ENCODE measurements at regions of chr15 and their contacts with region 1.

Region 1: GRCh38 chr15:86877171-86877646 is 797.5 kb downstream of the AGBL1 start:
- DNase-seq: peak in 1 of 2 donors; percentile 55
- ATAC-seq: peak; percentile 76 to 84 (median 81)
- H3K4me3 ChIP-seq: no peak overlapping the region
- H3K27ac ChIP-seq: peak overlapping the region; percentile 39
- H3K4me1 ChIP-seq: peaks cover 3% of the 10 kb centered on the region
- H3K27me3 ChIP-seq: no peaks in the 10 kb centered on the region
- CTCF ChIP-seq: peak; percentile 53

Region 2: DNA sequence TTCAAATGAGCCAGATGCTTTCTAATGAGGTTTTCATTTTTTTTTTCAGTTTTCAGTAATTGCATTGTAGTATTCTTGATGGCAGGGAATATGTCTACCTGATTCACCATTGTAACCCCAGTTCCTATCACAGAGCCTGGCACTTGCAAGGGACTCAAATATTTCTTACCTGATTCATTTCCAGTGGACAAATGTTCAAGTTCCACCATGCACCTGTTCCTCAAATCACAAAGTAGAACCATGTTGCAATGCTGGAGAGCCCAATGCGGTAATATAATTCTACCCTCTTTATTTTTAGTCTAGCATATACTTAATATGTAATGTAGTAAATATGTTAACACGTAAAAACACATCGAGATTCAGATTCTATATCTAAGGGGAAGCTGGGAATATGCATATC is 75.0 kb before region 1 on chr15:
- intact Hi-C with region 1: loop called in 1 of 2 experiments (anchors 5 kb)
- DNase-seq: no peak
- ATAC-seq: peak; percentile 83 to 94 (median 92)
- H3K4me3 ChIP-seq: no peak overlapping the region
- H3K27ac ChIP-seq: peak overlapping the region; percentile 56
- H3K4me1 ChIP-seq: peaks cover 18% of the 10 kb centered on the region
- H3K27me3 ChIP-seq: no peaks in the 10 kb centered on the region
- CTCF ChIP-seq: no peak

Region 3: GRCh38 chr15:87681054-87681453 is 803.8 kb after region 1 on chr15:
- intact Hi-C with region 1: no loop called
- DNase-seq: no peak
- ATAC-seq: no peak
- H3K4me3 ChIP-seq: no peak overlapping the region
- H3K27ac ChIP-seq: no peak overlapping the region
- H3K4me1 ChIP-seq: no peaks in the 10 kb centered on the region
- H3K27me3 ChIP-seq: no peaks in the 10 kb centered on the region
- CTCF ChIP-seq: no peak

Measured in psoas muscle (tissue), 8 donors.